ENCODE measurements at regions of chr16 and their contacts with region 1.

Region 1: DNA sequence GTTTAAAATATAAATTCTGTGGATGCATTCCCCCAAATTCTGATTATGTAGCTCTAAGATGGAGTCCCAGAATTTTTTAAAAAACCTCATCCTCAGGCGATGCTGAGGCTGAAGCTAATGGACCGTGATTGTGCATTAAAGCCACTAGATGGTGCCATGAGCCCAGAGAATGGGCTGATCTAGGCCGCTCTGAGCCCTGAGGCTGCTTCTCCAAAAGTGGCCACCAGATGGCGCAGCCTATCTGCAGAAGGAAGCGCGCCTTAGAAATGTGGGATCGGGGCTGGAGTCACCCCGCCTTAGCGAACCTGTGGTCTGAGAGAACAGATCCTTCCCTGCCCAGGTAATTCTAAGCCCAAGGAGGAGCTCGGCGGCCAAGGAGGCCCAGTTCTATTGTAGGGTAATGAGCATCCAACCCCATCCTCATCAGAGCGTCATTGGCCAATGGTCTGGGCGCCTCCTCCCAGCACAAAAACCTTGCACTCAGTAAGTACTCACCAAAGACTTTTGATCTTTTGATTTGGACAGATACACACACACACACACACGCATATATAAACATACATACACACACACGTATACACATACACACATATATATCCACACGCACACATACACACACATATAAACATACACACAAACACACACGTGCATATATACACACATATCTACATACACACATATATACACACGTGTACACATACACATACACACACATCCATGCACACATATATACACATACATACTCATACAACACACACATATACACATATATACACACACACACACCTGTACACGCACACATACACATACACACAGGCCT is 13.7 kb upstream of the MMP2 start:
- DNase-seq: peak; percentile 62 to 92
- H3K4me3 ChIP-seq: no peak overlapping the region
- H3K4me1 ChIP-seq: no peaks in the 10 kb centered on the region
- H3K27me3 ChIP-seq: no peaks in the 10 kb centered on the region

Region 2: DNA sequence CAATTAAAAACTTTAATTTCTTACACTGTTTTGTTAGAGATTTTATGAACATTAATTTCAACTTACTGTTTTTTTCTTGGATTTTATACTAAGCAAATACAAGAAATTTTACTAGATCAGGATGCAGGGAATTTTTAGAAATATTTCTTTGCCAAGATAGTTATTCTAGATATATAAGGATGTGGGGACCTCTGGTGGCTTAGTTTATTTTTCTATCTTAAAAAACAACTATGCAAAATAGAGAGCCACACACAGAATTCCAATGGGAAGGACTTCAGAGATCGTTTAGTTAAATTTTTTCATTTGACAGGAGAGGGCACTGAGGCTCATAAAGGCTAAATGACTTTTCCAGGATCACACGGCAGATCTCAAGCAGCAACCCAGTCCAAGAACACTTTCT is 78.2 kb after region 1 on chr16:
- in situ Hi-C with region 1: loop called (anchors 5 kb)
- DNase-seq: no peak
- H3K4me3 ChIP-seq: no peak overlapping the region
- H3K4me1 ChIP-seq: no peaks in the 10 kb centered on the region
- H3K27me3 ChIP-seq: no peaks in the 10 kb centered on the region

Region 3: DNA sequence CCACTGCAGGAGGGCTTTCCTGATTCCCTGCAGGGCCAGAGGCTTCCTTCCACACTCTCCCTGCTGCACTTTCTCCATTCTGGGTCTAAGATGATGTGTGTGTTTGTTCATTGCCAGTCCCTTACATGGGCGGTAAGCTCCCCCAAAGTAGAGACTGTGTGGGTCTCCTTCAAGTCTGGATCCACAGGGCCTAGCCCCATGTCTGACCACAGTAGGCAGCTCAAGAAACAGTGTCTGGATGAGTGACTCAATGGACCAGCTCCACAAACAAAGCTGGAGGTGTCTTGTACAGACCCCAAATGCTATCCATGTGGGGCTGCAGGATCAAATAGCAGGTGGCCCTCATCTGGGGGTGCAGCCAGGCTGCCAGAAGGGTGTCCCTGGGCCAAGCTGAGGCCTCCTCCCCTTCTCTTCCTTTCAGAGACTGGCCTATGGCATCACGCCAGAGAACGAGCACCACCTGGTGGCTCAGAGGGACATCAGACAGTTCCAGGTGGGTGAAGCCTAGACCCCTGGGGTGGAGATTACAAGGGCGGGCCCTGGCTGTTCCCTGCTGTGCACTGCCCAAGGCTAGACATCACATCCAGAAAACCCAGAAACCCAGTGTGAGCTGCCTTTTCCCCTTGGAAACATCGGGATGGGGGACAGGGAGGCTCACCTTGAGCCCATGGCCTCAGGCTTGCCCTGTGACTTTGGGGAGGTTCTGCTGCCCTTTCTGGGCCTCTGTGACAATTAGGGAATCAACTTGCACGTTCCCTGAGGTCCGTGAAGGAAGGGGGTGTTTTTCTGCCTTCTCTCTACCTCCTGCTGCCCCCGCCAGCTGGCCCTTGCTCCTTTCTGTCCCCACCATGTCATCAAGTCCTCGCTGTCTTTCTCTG is 236.4 kb after region 1 on chr16:
- in situ Hi-C with region 1: loop called (anchors 5 kb)
- DNase-seq: peak; percentile 31 to 77
- H3K4me3 ChIP-seq: no peak overlapping the region
- H3K4me1 ChIP-seq: no peaks in the 10 kb centered on the region
- H3K27me3 ChIP-seq: no peaks in the 10 kb centered on the region

Region 4: DNA sequence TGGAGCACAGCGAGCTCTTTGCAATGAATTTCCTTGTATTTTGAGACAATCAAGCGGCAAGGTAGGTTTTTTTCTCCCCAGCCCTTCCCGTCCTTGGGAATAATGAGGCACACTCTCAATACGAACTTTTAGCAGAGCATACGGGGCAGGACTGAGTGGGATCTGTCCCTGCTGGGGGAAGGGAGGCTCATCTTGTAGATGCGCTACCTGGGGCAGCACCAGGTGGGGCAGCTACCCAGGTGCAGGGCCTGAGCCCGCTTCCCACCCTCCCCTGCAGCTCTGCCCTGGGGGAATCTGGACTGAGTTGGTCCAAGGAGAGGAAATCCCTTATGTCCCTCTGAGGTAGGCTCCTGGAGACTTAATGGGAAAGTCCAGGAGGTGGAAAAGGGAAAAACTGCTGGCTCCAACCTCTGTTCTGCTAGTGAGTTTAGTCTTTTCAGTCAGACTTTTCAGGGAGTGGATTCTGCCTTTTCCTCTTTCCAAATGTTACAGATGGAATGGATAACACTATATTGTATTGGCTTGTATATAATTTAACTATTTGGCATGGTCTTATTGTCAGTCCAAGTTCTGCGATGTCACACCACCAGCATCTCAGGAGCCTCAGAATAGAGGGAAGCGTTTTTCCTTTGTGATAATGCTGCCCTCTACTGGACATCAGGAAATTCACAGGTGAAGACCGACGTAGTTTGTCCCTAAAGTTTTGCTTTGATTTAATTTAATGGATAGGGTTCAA is 377.2 kb after region 1 on chr16:
- in situ Hi-C with region 1: loop called (anchors 10 kb)
- DNase-seq: peak; percentile 38 to 53
- H3K4me3 ChIP-seq: no peak overlapping the region
- H3K4me1 ChIP-seq: no peaks in the 10 kb centered on the region
- H3K27me3 ChIP-seq: peaks cover 9% of the 10 kb centered on the region

Region 5: DNA sequence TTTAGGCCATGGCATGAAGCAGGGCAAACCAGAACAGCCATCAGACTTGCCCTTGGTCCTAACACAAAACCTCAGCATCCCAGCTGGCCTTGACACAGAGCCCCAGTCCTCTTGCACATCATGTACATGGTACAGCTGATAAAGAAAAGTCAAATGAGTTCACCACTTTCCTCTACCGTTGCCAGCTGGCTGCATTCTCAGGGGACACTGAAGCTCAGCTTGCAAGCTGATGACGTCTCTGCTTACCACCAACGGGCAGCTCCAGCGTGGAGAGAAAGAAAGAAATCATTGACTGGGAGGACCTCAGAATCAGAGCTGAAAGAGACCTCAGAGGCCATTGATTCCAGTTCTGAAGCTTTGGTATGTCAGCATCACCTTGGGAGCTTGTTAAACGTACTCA is 490.6 kb after region 1 on chr16:
- in situ Hi-C with region 1: no loop called
- DNase-seq: no peak
- H3K4me3 ChIP-seq: no peak overlapping the region
- H3K4me1 ChIP-seq: no peaks in the 10 kb centered on the region
- H3K27me3 ChIP-seq: peaks cover 3% of the 10 kb centered on the region; the same call in 1 of the 2 replicates

Region 6: GRCh38 chr16:56317998-56318826 is 852.9 kb after region 1 on chr16:
- in situ Hi-C with region 1: loop called (anchors 10 kb)
- DNase-seq: peak; percentile 72 to 89
- H3K4me3 ChIP-seq: no peak overlapping the region
- H3K4me1 ChIP-seq: no peaks in the 10 kb centered on the region
- H3K27me3 ChIP-seq: no peaks in the 10 kb centered on the region